Activated CD4-positive, alpha-beta memory T cell treated with anti-CD3 and anti-CD28 coated beads for 36 hours (primary cell): ENCODE measurements at regions of chr17 and their contacts with region 1.

Region 1: DNA sequence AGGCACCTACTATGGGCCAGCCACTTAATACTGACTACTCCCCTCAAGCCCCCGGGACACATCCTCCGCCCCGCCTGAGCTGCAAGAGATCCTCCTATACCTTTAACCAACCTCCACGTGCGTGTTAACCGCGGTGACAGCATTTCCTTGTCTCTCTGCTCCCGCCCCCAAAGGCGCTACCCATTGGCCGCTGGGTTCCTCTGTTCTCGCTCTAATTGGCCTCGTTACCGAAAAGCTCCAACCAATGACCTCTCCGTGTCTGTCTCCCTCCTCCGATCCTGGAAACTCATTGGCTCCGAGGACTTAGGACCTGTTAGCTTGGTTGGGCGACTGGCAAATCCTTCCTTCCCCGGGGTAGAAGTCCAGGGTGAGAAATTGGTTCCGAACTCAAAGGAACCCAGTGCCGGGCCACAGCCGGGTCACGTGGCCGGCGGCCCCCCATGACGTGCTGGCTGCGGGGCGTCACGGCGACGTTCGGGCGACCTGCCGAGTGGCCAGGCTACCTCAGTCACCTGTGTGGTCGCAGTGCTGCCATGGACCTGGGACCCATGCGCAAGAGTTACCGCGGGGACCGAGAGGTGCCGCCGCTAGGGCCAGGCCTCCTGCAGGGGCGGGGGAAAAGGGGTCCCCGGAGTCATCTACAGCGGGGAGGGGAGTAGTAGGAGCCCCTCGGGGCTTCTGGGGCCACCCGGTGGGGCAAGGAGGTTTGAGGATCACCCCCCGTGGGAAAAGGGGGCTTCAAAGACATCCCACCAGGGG is at the start of gene PNPO:
- DNase-seq: peak; percentile 98
- H3K4me3 Mint-ChIP-seq: peak within 1 kb of the TSS; percentile 95
- H3K27ac Mint-ChIP-seq: peak within 1 kb of the TSS; percentile 81
- H3K4me1 Mint-ChIP-seq: peaks cover 52% of the 10 kb centered on the region
- H3K27me3 Mint-ChIP-seq: no peaks in the 10 kb centered on the region
- total RNA-seq, gene PNPO: 32.5 to 34.4 TPM

Region 2: GRCh38 chr17:47708863-47709541 is 232.4 kb before region 1 on chr17:
- CTCF ChIA-PET with region 1: no interaction called
- POLR2A ChIA-PET with region 1: no interaction called
- intact Hi-C with region 1: loop called (anchors 5 kb)
- DNase-seq: no peak
- H3K4me3 Mint-ChIP-seq: no peak overlapping the region
- H3K27ac Mint-ChIP-seq: no peak overlapping the region
- H3K4me1 Mint-ChIP-seq: peaks cover 62% of the 10 kb centered on the region
- H3K27me3 Mint-ChIP-seq: no peaks in the 10 kb centered on the region

Region 3: GRCh38 chr17:47831003-47831933 is 110.1 kb before region 1 on chr17 and contains the starts of genes LRRC46 and MRPL10:
- CTCF ChIA-PET with region 1: interaction called, 5 read pairs
- POLR2A ChIA-PET with region 1: no interaction called
- intact Hi-C with region 1: loop called (anchors 1 kb)
- DNase-seq: peak; percentile 96
- H3K4me3 Mint-ChIP-seq: peak within 1 kb of the TSS; percentile 85
- H3K27ac Mint-ChIP-seq: peak within 1 kb of the TSS; percentile 81
- H3K4me1 Mint-ChIP-seq: peaks cover 50% of the 10 kb centered on the region
- H3K27me3 Mint-ChIP-seq: no peaks in the 10 kb centered on the region
- total RNA-seq, gene LRRC46: 0.29 to 0.59 TPM
- total RNA-seq, gene MRPL10: 69.9 to 72.4 TPM

Region 4: DNA sequence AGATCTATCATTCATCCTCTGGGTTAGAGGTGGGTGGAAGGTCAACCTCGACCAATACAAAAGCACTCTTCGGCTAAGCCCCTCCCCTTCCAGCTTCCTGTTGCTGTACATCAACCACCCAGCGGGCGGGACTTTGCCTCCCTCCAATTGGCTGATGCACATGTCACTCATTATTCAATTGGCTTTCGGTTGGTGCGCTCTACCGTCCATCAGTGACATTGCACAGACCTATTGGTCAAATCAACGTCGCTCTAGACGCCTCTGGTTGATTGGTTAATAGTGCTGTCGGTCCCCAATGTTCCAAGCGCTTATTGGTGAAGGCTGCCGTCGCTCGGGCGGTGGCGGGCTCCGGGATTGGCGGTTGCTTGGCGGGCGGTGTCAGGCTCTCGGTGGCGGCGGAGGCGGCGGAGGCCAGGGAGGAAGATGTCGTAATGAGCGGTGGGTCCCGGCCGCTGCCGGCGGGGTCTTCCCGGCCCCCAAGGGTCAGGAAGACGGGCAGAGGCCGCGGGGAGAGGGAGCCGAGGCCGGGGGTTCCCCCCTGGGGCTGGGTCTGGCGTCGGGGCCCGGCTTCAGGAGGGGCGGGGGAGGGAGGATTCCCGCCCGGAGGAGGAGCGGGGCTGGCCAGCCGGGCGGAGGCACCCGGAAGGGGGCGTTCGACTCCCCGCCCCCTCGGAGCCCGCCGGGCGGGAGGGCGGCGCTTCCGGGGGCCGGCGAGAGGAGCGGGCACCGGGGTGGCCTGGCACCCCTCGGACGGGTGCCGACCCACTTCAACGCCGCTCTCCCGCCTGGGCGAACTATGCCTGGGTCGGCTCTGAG is 45.4 kb before region 1 on chr17 and contains the start of gene SP2:
- CTCF ChIA-PET with region 1: interaction called, 17 read pairs
- POLR2A ChIA-PET with region 1: interaction called, 12 read pairs
- intact Hi-C with region 1: loop called (anchors 1 kb)
- DNase-seq: peak; percentile 100
- H3K4me3 Mint-ChIP-seq: peak within 1 kb of the TSS; percentile 95
- H3K27ac Mint-ChIP-seq: peak within 1 kb of the TSS; percentile 87
- H3K4me1 Mint-ChIP-seq: peaks cover 34% of the 10 kb centered on the region
- H3K27me3 Mint-ChIP-seq: no peaks in the 10 kb centered on the region
- total RNA-seq, gene SP2: 15.1 to 17.2 TPM

Region 5: GRCh38 chr17:48107168-48108132 is 166.0 kb after region 1 on chr17 and contains the start of gene SNX11:
- CTCF ChIA-PET with region 1: no interaction called
- POLR2A ChIA-PET with region 1: no interaction called
- intact Hi-C with region 1: loop called (anchors 1 kb)
- DNase-seq: peak; percentile 95
- H3K4me3 Mint-ChIP-seq: peak within 1 kb of the TSS; percentile 100
- H3K27ac Mint-ChIP-seq: peak within 1 kb of the TSS; percentile 97
- H3K4me1 Mint-ChIP-seq: peaks cover 59% of the 10 kb centered on the region
- H3K27me3 Mint-ChIP-seq: no peaks in the 10 kb centered on the region
- total RNA-seq, gene SNX11: 19.7 to 21.7 TPM